OCI-LY7 (cell line): ENCODE measurements at regions of chr9 and their contacts with region 1.

Region 1: GRCh38 chr9:104984121-104984520 is 56.2 kb upstream of the ABCA1 start:
- DNase-seq: no peak
- H3K4me3 ChIP-seq: no peak overlapping the region
- H3K27ac ChIP-seq: no peak overlapping the region
- H3K4me1 ChIP-seq: peaks cover 25% of the 10 kb centered on the region
- CTCF ChIP-seq: no peak

Region 2: GRCh38 chr9:104944356-104944755 is 39.8 kb before region 1 on chr9:
- CTCF ChIA-PET with region 1: no interaction called
- POLR2A ChIA-PET with region 1: interaction called, 12 read pairs
- intact Hi-C with region 1: no loop called
- DNase-seq: no peak
- H3K4me3 ChIP-seq: no peak overlapping the region
- H3K27ac ChIP-seq: no peak overlapping the region
- H3K4me1 ChIP-seq: no peaks in the 10 kb centered on the region
- CTCF ChIP-seq: no peak

Region 3: GRCh38 chr9:104968025-104968982 is 15.8 kb before region 1 on chr9:
- CTCF ChIA-PET with region 1: interaction called, 3 read pairs
- POLR2A ChIA-PET with region 1: interaction called, 29 read pairs
- intact Hi-C with region 1: no loop called
- DNase-seq: peak; percentile 90
- H3K4me3 ChIP-seq: peak overlapping the region; percentile 76
- H3K27ac ChIP-seq: no peak overlapping the region
- H3K4me1 ChIP-seq: peaks cover 6% of the 10 kb centered on the region
- CTCF ChIP-seq: no peak